ENCODE measurements at regions of chr13 and their contacts with region 1.

Region 1: DNA sequence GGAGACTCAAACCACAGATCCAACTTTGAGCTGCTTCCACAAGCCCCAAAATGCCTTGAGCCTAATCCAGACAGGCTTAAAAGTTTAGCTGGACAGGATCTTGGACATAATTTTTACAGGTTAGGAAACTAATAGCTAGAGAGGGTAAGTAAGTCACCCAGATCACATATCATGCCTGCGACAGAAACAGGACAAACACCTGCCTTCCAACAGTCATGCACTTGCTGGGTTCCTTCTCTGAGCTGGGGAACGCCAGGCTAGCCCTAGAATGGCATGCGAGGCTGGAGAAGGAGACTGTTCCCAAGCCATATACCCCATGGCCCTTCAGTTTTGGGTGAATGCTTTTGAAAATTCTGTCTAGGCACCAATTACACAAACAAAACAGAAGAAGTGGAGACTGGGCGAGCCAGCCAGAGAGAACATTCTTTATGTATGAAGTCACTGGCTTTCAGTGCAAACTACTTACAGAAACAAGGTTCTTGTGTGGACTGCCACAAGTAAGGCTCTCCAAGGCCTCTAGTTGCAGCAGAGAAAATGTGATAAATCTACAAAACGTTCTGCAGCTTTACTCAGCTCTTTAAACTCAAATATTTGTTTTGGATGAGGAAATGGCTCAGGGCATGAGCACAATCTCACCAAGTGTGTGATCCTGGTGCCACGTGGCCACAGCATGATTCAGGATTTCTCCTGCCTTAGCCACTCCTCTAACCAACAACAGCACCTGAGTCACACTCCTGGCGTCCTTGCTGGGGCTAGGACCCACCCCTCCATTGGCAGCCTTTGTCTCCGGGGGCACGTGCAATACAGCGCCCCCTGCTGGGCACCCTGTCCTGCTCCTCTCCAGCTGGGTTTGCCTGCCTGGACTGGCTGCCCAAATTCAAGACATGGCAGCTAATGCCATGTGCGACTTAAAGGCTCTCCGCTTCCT is 73.4 kb upstream of the UBL3 start:
- DNase-seq: peak; percentile 95
- H3K4me3 ChIP-seq: peak overlapping the region; percentile 25; the same call in 1 of the 2 replicates
- H3K27ac ChIP-seq: peak overlapping the region; percentile 99
- H3K27me3 ChIP-seq: no peaks in the 10 kb centered on the region
- CTCF ChIP-seq: peak; percentile 96

Region 2: GRCh38 chr13:29758531-29759114 is 165.2 kb before region 1 on chr13:
- CTCF ChIA-PET with region 1: no interaction called
- POLR2A ChIA-PET with region 1: no interaction called
- DNase-seq: no peak
- H3K4me3 ChIP-seq: no peak overlapping the region
- H3K27ac ChIP-seq: no peak overlapping the region
- H3K27me3 ChIP-seq: no peaks in the 10 kb centered on the region
- CTCF ChIP-seq: no peak

Region 3: GRCh38 chr13:29771247-29771646 is 152.6 kb before region 1 on chr13:
- CTCF ChIA-PET with region 1: interaction called, 10 read pairs
- POLR2A ChIA-PET with region 1: no interaction called
- DNase-seq: no peak
- H3K4me3 ChIP-seq: no peak overlapping the region
- H3K27ac ChIP-seq: no peak overlapping the region
- H3K27me3 ChIP-seq: no peaks in the 10 kb centered on the region
- CTCF ChIP-seq: peak; percentile 43

Region 4: DNA sequence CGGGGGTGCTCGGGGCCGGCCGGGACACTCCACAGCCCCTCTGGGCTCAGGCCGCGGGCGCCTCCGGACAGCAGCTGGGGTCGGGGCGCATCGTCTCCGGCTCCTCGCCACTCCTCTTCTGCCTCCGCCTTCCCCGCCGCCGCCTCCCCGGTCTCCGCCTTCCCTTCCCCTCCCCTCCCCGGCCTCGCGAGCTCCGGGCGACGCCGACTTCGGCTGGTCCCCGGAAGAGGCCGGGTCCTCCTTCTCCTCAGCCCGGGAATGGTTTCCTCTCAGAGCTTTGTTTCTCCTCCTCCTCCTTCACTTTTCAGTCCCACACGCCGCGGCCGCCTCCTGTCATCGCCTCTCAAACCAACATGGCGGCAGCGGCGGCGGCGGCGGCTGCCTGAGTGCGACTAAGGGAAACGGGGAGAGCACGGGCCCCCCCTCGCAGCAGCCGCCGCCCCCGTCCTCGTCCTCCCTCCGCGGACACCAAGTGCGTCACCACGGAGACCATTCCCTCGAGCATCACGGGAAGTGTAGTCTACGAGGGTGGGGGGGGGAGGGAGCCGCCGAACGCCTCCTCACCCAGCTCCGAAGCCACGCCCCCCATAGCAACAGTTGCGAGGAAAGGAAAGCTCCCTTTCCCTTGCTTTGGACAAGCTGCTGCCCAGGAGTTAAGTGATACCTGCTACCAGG is 73.5 kb before region 1 on chr13 and contains the start of gene UBL3:
- CTCF ChIA-PET with region 1: interaction called, 16 read pairs
- POLR2A ChIA-PET with region 1: interaction called, 37 read pairs
- DNase-seq: peak; percentile 87
- H3K4me3 ChIP-seq: peak within 1 kb of the TSS; percentile 70
- H3K27ac ChIP-seq: peak within 1 kb of the TSS; percentile 99
- H3K27me3 ChIP-seq: no peaks in the 10 kb centered on the region
- CTCF ChIP-seq: no peak
- polyA plus RNA-seq, gene UBL3: 16.8 and 24.7 TPM in 2 replicates

Region 5: GRCh38 chr13:29861694-29862110 is 62.1 kb before region 1 on chr13:
- CTCF ChIA-PET with region 1: interaction called, 6 read pairs
- POLR2A ChIA-PET with region 1: interaction called, 14 read pairs
- DNase-seq: peak; percentile 84
- H3K4me3 ChIP-seq: no peak overlapping the region
- H3K27ac ChIP-seq: peak overlapping the region; percentile 71
- H3K27me3 ChIP-seq: no peaks in the 10 kb centered on the region
- CTCF ChIP-seq: no peak

Region 6: GRCh38 chr13:29905845-29906244 is 18.0 kb before region 1 on chr13:
- CTCF ChIA-PET with region 1: interaction called, 26 read pairs
- POLR2A ChIA-PET with region 1: interaction called, 4 read pairs
- DNase-seq: no peak
- H3K4me3 ChIP-seq: no peak overlapping the region
- H3K27ac ChIP-seq: no peak overlapping the region
- H3K27me3 ChIP-seq: no peaks in the 10 kb centered on the region
- CTCF ChIP-seq: no peak

Region 7: GRCh38 chr13:29935309-29935981 is 11.6 kb after region 1 on chr13:
- CTCF ChIA-PET with region 1: interaction called, 17 read pairs
- POLR2A ChIA-PET with region 1: interaction called, 4 read pairs
- DNase-seq: no peak
- H3K4me3 ChIP-seq: no peak overlapping the region
- H3K27ac ChIP-seq: no peak overlapping the region
- H3K27me3 ChIP-seq: peaks cover 28% of the 10 kb centered on the region
- CTCF ChIP-seq: no peak

Region 8: DNA sequence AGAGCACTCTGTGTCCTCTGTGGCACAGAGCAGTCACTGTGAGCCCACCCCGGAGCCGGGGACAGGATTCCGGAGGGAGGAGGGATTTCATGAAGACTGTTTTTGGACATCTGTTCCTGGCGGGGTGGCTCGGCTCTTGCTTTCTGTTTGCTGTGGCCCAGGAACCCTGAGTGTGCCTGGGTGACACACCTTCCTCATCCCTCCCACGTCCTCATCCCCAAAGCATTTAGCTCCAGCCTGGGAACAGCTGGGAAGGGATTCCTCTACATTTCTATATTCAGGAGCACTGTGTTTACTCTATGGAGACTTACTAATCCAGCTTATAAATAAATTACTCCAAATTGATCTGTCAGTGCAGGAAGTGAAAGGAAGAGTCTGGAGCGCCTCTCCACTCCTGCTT is 24.4 kb after region 1 on chr13:
- CTCF ChIA-PET with region 1: interaction called, 18 read pairs
- POLR2A ChIA-PET with region 1: interaction called, 5 read pairs
- DNase-seq: peak; percentile 61
- H3K4me3 ChIP-seq: no peak overlapping the region
- H3K27ac ChIP-seq: peak overlapping the region; percentile 4
- H3K27me3 ChIP-seq: peaks cover 4% of the 10 kb centered on the region
- CTCF ChIP-seq: no peak

Region 9: DNA sequence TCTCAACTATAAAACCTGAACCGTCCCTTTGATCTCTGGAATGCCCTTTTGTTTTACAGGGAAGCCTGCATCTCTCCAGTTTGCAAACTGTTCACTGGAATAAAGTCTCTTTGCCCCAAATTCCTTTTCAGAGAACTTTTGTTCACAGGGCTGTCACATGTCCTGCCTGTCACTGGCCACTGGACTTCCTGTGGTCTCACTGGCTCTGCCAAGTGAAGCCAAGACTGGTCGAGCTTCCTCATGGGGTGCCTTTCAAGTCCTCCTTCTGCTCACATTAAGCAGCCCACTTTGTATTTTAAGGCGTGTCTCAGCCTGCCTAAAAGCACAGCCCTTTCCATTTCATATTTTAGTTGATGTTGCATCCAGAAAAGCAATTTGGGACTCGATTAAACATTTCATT is 167.9 kb after region 1 on chr13:
- CTCF ChIA-PET with region 1: no interaction called
- POLR2A ChIA-PET with region 1: no interaction called
- DNase-seq: no peak
- H3K4me3 ChIP-seq: no peak overlapping the region
- H3K27ac ChIP-seq: no peak overlapping the region
- H3K27me3 ChIP-seq: peaks cover 4% of the 10 kb centered on the region
- CTCF ChIP-seq: no peak

Measured in AG04450 (cell line).